Activated naive CD8-positive, alpha-beta T cell treated with anti-CD3 and anti-CD28 coated beads, Interleukin-2, amount 10 ng/mL, durations not matched to agents 7 days and 5 days (primary cell): ENCODE measurements at regions of chr2 and their contacts with region 1.

Region 1: GRCh38 chr2:61520261-61520660 is 17.9 kb downstream of the XPO1 start:
- DNase-seq: no peak
- ATAC-seq: no peak
- H3K4me3 Mint-ChIP-seq: no peak overlapping the region
- H3K27ac Mint-ChIP-seq: no peak overlapping the region
- H3K4me1 Mint-ChIP-seq: peaks cover 23% of the 10 kb centered on the region
- H3K27me3 Mint-ChIP-seq: no peaks in the 10 kb centered on the region

Region 2: DNA sequence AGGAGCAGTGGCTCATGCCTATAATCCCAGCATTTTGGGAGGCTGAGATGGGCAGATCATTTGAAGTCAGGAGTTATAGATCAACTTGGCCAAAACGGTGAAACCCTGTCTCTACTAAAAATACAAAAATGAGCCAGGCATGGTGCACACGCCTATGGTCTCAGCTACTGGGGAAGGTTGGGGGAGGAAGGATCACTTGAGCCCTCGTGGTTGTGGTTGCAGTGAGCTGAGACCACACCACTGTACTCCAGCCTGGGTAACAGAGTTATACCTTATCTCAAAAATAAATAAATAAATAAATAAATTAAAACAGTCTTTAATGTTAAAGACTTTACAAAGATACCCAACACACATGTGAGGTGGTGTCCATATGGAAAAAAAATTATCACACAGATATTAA is 224.3 kb before region 1 on chr2:
- POLR2A ChIA-PET with region 1: interaction called, 10 read pairs
- DNase-seq: no peak
- ATAC-seq: no peak
- H3K4me3 Mint-ChIP-seq: no peak overlapping the region
- H3K27ac Mint-ChIP-seq: no peak overlapping the region
- H3K4me1 Mint-ChIP-seq: peaks cover 9% of the 10 kb centered on the region
- H3K27me3 Mint-ChIP-seq: no peaks in the 10 kb centered on the region